Posterior vena cava (tissue), 2 donors: ENCODE measurements at regions of chrX and their contacts with region 1.

Region 1: GRCh38 chrX:8913655-8914409 is 112.6 kb upstream of the FAM9A start:
- DNase-seq: no peak

Region 2: DNA sequence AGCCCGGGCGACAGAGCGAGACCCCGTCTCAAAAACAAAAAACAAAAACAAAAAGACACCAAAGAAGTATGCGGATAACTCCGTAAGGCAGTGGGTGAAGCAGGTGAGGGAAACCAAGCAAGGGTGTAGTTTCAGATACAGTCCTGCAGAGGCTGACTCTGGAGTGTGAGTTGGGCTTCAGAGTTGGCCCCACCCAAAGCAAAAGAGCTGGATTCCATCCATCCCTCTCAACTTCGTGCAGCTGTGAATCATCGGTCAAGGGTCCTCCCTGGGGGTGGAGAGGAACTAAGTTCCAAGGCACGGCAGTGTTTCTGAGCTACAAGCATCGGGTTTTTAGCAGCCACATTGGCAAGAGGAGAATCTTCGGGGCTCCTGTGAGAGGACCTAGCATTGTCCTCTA is 68.8 kb before region 1 on chrX:
- intact Hi-C with region 1: no loop called
- DNase-seq: no peak

Region 3: GRCh38 chrX:8887004-8887403 is 26.8 kb before region 1 on chrX:
- intact Hi-C with region 1: loop called in 1 of 2 experiments (anchors 2 kb)
- DNase-seq: no peak